Breast epithelium (tissue), 4 donors: ENCODE measurements at regions of chr7 and their contacts with region 1.

Region 1: DNA sequence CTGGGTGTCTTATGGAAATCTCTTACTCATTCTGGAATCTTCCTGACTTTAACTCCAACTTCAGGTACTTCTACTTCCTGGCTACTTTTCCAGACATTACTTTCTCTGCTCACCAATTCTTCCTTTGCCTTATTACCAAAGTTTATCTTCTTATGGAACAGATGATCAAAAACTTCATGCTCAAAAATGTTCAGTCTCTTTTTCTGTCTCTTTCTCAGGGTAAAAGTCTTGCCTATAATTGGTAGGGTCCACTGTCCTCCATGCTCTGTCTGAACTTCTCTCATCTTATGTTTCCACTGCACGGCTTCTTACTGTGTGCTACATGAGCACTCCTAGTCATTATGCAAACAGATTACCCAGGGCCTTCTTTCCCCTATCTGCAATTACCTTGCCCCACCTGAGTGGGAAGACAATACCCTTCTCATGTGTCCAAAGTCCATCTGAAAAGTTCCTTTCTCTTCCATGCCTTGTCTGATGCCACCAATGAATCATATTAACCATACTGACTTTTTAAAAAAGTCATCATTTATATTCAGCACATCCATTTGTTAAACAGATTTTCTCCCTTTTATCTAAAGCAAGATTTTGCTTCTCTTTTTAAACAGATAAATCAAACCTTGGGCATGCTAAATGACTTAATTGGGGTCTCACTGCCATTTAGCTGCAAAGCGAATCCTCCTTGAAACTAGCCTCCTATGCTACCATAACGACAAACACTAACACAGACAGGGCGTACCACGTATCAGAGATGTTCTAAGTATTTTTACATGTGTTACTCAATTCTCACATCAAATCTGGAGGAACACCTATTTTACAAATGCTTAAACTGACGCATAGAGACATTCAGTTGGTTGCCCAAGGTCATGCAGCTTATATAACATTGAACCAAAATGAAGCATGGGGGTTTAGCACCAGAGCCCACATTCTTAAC is 48.8 kb downstream of the SEMA3C start:
- DNase-seq: no peak
- H3K4me3 ChIP-seq: no peak overlapping the region
- H3K27ac ChIP-seq: peak overlapping the region; percentile 47 to 52
- H3K4me1 ChIP-seq: no peaks in the 10 kb centered on the region
- H3K27me3 ChIP-seq: no peaks in the 10 kb centered on the region
- CTCF ChIP-seq: no peak
- POLR2A ChIP-seq: no peak

Region 2: GRCh38 chr7:81447351-81447952 is 577.4 kb after region 1 on chr7:
- intact Hi-C with region 1: loop called (anchors 5 kb)
- DNase-seq: no peak
- H3K4me3 ChIP-seq: no peak overlapping the region
- H3K27ac ChIP-seq: no peak overlapping the region
- H3K4me1 ChIP-seq: no peaks in the 10 kb centered on the region
- H3K27me3 ChIP-seq: no peaks in the 10 kb centered on the region
- CTCF ChIP-seq: peak in 2 of 3 donors; percentile 31 to 50
- POLR2A ChIP-seq: no peak